ENCODE measurements at regions of chr10 and their contacts with region 1.

Region 1: DNA sequence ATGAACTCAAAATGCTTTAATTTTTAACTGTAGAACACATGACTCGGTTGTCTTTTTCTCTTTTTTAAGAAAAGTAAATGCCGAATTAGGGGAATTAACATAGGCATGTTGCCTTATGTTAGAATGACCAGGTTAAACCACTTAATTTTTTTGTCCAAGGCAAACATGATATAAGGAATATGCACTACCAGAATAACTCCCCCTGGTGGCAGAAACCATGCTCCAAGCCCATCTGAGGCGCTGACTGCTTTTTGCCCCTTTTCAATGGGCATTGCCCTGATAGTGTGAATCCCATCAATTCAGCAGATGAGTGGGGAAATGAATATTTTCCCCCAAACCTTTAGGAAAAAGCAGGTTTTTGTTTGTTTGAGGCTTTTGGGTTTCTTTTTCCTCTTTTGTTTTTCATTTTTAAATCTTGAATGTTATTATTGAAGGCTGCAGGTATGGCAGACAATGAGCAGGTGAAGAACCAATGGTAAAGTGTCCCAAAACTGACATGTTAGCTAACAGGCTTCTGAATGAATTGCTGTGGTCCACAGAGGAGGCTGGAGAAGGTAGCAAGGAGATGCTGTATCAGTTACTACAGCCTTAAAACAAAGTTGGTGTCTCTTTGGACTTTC is 284.3 kb downstream of the SORCS3 start:
- DNase-seq: peak; percentile 16
- H3K4me3 ChIP-seq: no peak overlapping the region
- H3K27ac ChIP-seq: no peak overlapping the region
- H3K4me1 ChIP-seq: no peaks in the 10 kb centered on the region
- H3K27me3 ChIP-seq: peaks cover 2% of the 10 kb centered on the region
- CTCF ChIP-seq: peak; percentile 80 to 81

Region 2: DNA sequence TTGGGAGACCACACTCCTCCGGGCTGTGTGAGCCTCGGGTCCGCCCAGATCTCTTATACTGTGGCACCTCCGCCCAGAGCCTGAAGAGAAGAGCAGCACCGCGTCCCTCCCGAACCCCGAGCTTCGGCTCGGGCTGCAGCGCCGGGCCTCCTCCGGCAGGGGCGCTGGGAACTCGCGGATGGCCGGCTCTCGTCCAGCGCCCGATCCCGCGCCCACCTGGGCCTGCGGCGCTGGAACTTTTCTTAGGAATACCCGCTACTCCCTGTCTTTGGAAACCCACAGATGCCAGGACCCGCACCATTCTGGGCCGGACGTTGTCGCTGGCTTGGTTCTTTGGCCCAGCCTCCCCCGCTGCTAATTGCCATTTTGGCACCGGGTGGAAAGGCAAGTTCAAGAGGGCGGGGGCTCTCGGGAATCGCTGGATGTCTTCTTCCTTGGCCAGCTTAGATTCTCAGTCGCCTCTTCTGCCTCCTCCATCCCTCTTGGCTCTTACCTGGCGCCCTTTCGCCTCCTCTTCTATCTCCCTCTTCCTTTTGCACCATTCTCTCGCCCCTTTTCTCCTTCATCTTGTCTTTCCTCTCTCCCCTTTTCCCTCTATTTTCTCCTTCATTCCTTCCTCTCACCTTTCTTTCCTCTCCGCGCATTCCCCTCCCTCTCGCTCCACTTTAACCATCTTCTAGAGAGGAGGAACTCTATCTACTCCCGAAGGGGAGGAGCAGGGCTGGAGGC is 286.3 kb before region 1 on chr10:
- CTCF ChIA-PET with region 1: no interaction called
- dilution Hi-C with region 1: no loop called
- in situ Hi-C with region 1: no loop called
- intact Hi-C with region 1: loop called (anchors 5 kb)
- DNase-seq: no peak
- H3K4me3 ChIP-seq: no peak overlapping the region
- H3K27ac ChIP-seq: no peak overlapping the region
- H3K4me1 ChIP-seq: peaks cover 6% of the 10 kb centered on the region
- H3K27me3 ChIP-seq: peaks cover 57% of the 10 kb centered on the region
- CTCF ChIP-seq: peak; percentile 37 to 55

Region 3: GRCh38 chr10:104650072-104650471 is 275.3 kb before region 1 on chr10:
- CTCF ChIA-PET with region 1: no interaction called
- dilution Hi-C with region 1: no loop called
- in situ Hi-C with region 1: no loop called
- intact Hi-C with region 1: loop called (anchors 2 kb)
- DNase-seq: no peak
- H3K4me3 ChIP-seq: no peak overlapping the region
- H3K27ac ChIP-seq: no peak overlapping the region
- H3K4me1 ChIP-seq: no peaks in the 10 kb centered on the region
- H3K27me3 ChIP-seq: no peaks in the 10 kb centered on the region
- CTCF ChIP-seq: peak; percentile 37 to 53

Region 4: DNA sequence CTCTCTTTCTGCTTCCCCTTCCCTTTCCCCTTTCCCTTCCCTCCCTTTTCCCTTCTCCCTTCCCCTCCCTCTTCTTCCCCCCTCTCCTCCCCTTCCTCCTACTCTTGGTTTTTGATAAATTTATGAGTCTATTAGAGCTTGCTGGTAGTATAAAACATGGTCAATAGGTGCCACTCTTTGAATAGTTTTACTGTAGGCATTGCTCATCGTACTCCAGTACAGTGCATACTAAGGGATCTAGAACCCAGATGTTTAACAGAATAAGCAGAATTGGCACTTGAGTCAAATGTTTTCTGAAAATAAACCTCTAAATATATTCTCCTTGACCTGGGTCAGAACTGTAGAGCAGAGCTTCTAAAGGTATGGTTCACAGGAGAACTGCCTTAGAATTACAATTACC is 157.6 kb before region 1 on chr10:
- CTCF ChIA-PET with region 1: no interaction called
- dilution Hi-C with region 1: no loop called
- in situ Hi-C with region 1: no loop called
- intact Hi-C with region 1: loop called (anchors 1 kb)
- DNase-seq: no peak
- H3K4me3 ChIP-seq: no peak overlapping the region
- H3K27ac ChIP-seq: no peak overlapping the region
- H3K4me1 ChIP-seq: peaks cover 4% of the 10 kb centered on the region
- H3K27me3 ChIP-seq: no peaks in the 10 kb centered on the region
- CTCF ChIP-seq: peak; percentile 12 to 41